Activated CD4-positive, alpha-beta T cell treated with anti-CD3 and anti-CD28 coated beads, Interleukin-2, amount 10 ng/mL, durations not matched to agents 24 days and 14 days (primary cell): ENCODE measurements at regions of chr2 and their contacts with region 1.

Region 1: DNA sequence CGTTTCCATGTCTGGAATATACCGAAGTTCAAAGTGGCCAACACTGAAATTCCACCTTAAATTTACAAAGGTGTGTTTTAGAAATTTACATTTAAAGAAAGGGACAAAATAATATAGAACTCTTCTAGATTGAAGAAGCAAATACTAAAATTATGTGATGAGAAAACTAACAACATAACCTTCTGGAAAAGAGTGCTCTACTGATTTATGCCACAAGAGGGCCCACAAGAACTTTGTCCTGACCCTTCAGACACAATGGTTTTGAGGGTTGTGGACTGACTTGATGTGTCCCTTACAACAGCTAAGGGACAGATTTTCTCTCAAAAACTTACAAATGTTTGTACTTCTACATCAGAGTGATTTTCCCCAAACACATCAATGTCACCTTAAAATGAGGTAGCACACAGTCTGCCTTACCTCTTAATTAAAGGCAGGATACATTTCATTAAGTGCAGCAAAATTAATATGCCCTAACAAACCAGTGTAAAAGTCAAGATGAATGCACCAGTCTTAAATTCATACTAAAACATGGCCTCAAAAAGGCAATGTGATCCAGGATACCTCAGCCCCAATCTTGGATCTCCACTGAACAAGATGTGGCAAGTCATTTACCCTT is 36.2 kb downstream of the EIF2AK3 start:
- DNase-seq: peak; percentile 87
- H3K4me3 Mint-ChIP-seq: no peak overlapping the region
- H3K27ac Mint-ChIP-seq: peak overlapping the region; percentile 25
- H3K4me1 Mint-ChIP-seq: peaks cover 3% of the 10 kb centered on the region
- H3K27me3 Mint-ChIP-seq: no peaks in the 10 kb centered on the region

Region 2: DNA sequence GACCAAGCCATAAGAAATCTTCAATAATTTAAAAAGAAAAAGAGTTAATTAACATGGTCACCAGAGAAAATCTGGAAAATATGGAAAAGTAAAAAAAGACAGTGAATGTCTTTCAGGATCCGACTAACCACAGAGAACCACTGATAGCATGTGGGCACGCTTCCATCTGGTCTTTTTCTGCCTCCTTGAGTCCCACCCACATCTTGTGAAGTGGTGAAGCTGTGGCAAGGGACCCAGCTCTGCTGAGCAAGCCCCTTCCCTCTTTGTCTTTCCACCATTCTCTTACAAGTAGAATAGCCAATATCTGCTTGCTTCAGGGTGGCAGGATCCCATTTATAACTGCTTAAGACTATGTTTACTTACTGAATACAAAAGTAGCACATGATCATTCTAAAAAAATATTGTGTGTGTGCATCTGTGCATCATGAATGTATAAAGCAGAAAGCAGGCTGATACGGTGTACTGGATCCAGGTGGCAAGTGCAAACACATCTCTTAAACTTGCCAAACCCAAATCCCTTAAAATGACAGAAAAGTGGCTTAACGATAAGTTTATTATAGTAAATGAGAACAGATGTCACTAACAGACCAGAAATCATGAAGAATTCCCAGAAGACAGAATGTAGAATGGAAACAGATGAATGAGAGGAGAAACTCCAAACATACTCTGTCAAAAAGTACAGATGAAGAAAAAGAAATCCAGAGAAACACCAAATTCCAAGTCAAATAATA is 190.9 kb before region 1 on chr2:
- intact Hi-C with region 1: no loop called
- DNase-seq: no peak
- H3K4me3 Mint-ChIP-seq: no peak overlapping the region
- H3K27ac Mint-ChIP-seq: no peak overlapping the region
- H3K4me1 Mint-ChIP-seq: no peaks in the 10 kb centered on the region
- H3K27me3 Mint-ChIP-seq: peaks cover 8% of the 10 kb centered on the region

Region 3: GRCh38 chr2:88669371-88670214 is 78.5 kb after region 1 on chr2:
- intact Hi-C with region 1: loop called (anchors 1 kb)
- DNase-seq: peak; percentile 79
- H3K4me3 Mint-ChIP-seq: no peak overlapping the region
- H3K27ac Mint-ChIP-seq: no peak overlapping the region
- H3K4me1 Mint-ChIP-seq: no peaks in the 10 kb centered on the region
- H3K27me3 Mint-ChIP-seq: peaks cover 3% of the 10 kb centered on the region